PC-9 (cell line): ENCODE measurements at regions of chr7 and their contacts with region 1.

Region 1: GRCh38 chr7:47088329-47089067 is 493.4 kb downstream of the TNS3 start:
- DNase-seq: peak; percentile 56 to 67
- H3K4me3 ChIP-seq: no peak overlapping the region
- H3K27ac ChIP-seq: no peak overlapping the region
- H3K4me1 ChIP-seq: no peaks in the 10 kb centered on the region
- H3K27me3 ChIP-seq: no peaks in the 10 kb centered on the region
- CTCF ChIP-seq: peak; percentile 99

Region 2: GRCh38 chr7:45978010-45978681 is 1110.4 kb before region 1 on chr7:
- CTCF ChIA-PET with region 1: no interaction called
- POLR2A ChIA-PET with region 1: no interaction called
- intact Hi-C with region 1: loop called (anchors 5 kb)
- DNase-seq: peak; percentile 91 to 100
- H3K4me3 ChIP-seq: peak overlapping the region; percentile 23; the same call in 1 of the 2 replicates
- H3K27ac ChIP-seq: peak overlapping the region; percentile 97
- H3K4me1 ChIP-seq: peaks cover 52% of the 10 kb centered on the region
- H3K27me3 ChIP-seq: no peaks in the 10 kb centered on the region
- CTCF ChIP-seq: no peak

Region 3: GRCh38 chr7:46454816-46455215 is 633.7 kb before region 1 on chr7:
- CTCF ChIA-PET with region 1: no interaction called
- POLR2A ChIA-PET with region 1: no interaction called
- intact Hi-C with region 1: loop called (anchors 1 kb)
- DNase-seq: no peak
- H3K4me3 ChIP-seq: no peak overlapping the region
- H3K27ac ChIP-seq: no peak overlapping the region
- H3K4me1 ChIP-seq: no peaks in the 10 kb centered on the region
- H3K27me3 ChIP-seq: no peaks in the 10 kb centered on the region
- CTCF ChIP-seq: no peak

Region 4: DNA sequence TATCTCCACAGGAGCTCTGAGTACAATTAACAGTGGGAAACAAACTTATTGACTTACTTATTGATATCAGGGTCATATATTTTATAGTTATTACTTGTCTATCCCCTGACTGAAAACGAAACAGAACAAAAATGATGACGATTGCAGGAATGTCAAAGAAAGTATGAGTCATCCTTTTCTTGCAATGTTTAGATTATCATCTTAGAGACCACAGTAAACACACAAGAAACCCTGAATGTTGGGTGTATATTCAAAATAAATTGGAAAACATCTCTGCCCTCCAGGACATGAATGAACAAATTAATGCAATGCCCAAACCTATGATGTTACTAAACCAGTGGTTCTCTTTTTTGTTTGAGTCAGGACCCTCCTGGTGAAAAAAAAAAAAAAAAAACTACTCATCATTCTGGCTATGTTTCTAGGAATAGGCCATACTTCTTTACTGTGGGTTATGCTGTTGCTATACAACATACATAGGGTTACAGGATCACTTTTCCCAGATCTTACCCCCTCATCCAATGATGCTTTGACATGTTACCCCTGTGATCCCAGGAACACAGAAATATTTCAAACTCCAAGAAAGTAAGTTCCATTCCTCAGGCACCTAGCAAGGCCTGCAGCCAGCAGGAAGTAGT is 544.0 kb before region 1 on chr7:
- CTCF ChIA-PET with region 1: no interaction called
- POLR2A ChIA-PET with region 1: no interaction called
- intact Hi-C with region 1: loop called (anchors 5 kb)
- DNase-seq: peak; percentile 34 to 84
- H3K4me3 ChIP-seq: no peak overlapping the region
- H3K27ac ChIP-seq: peak overlapping the region; percentile 67
- H3K4me1 ChIP-seq: peaks cover 30% of the 10 kb centered on the region
- H3K27me3 ChIP-seq: no peaks in the 10 kb centered on the region
- CTCF ChIP-seq: no peak

Region 5: GRCh38 chr7:46682836-46683624 is 405.5 kb before region 1 on chr7:
- CTCF ChIA-PET with region 1: no interaction called
- POLR2A ChIA-PET with region 1: no interaction called
- intact Hi-C with region 1: no loop called
- DNase-seq: peak in 1 of 2 experiments; percentile 36
- H3K4me3 ChIP-seq: no peak overlapping the region
- H3K27ac ChIP-seq: no peak overlapping the region
- H3K4me1 ChIP-seq: 0 out of 2 replicates have a peak, but pooled peaks cover 6% of the 10 kb centered on the region
- H3K27me3 ChIP-seq: no peaks in the 10 kb centered on the region
- CTCF ChIP-seq: no peak

Region 6: DNA sequence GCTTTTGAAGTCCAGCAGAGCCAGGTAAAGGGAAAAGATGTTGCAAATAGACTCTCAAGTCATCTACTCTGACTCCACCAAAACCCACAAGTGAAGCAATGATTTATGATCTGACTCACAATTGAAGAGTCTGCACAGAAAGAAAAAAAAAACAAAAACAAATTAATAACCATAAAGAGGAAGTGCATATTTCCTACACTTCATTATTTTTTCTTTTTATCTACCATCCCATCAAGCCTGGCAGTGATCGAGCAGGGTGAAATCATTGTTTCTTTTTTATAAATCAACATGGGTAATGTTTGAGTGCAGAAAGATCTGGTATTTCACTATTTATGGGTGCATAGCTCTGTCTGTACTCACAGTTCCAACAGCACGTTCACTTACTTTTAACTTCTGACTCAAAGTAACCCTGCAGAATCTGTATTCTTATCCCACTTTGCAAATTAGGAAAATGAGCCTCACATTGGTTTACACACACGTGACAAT is 335.6 kb before region 1 on chr7:
- CTCF ChIA-PET with region 1: no interaction called
- POLR2A ChIA-PET with region 1: no interaction called
- intact Hi-C with region 1: loop called (anchors 1 kb)
- DNase-seq: peak; percentile 32 to 96
- H3K4me3 ChIP-seq: peak overlapping the region; percentile 23; the same call in 1 of the 2 replicates
- H3K27ac ChIP-seq: peak overlapping the region; percentile 74
- H3K4me1 ChIP-seq: peaks cover 41% of the 10 kb centered on the region
- H3K27me3 ChIP-seq: no peaks in the 10 kb centered on the region
- CTCF ChIP-seq: no peak

Region 7: GRCh38 chr7:46908770-46909169 is 179.7 kb before region 1 on chr7:
- CTCF ChIA-PET with region 1: no interaction called
- POLR2A ChIA-PET with region 1: interaction called, 4 read pairs
- intact Hi-C with region 1: loop called (anchors 10 kb)
- DNase-seq: peak; percentile 53 to 88
- H3K4me3 ChIP-seq: no peak overlapping the region
- H3K27ac ChIP-seq: no peak overlapping the region
- H3K4me1 ChIP-seq: peaks cover 17% of the 10 kb centered on the region
- H3K27me3 ChIP-seq: no peaks in the 10 kb centered on the region
- CTCF ChIP-seq: no peak

Region 8: GRCh38 chr7:47039904-47040303 is 48.6 kb before region 1 on chr7:
- CTCF ChIA-PET with region 1: no interaction called
- POLR2A ChIA-PET with region 1: no interaction called
- intact Hi-C with region 1: no loop called
- DNase-seq: no peak
- H3K4me3 ChIP-seq: no peak overlapping the region
- H3K27ac ChIP-seq: no peak overlapping the region
- H3K4me1 ChIP-seq: no peaks in the 10 kb centered on the region
- H3K27me3 ChIP-seq: no peaks in the 10 kb centered on the region
- CTCF ChIP-seq: no peak